HAP-1 (cell line): ENCODE measurements at regions of chr17 and their contacts with region 1.

Region 1: GRCh38 chr17:37107406-37108083 is 158.8 kb downstream of the AATF start:
- DNase-seq: no peak
- H3K4me3 ChIP-seq: no peak overlapping the region
- H3K4me1 ChIP-seq: peaks cover 80% of the 10 kb centered on the region
- H3K27me3 ChIP-seq: no peaks in the 10 kb centered on the region

Region 2: DNA sequence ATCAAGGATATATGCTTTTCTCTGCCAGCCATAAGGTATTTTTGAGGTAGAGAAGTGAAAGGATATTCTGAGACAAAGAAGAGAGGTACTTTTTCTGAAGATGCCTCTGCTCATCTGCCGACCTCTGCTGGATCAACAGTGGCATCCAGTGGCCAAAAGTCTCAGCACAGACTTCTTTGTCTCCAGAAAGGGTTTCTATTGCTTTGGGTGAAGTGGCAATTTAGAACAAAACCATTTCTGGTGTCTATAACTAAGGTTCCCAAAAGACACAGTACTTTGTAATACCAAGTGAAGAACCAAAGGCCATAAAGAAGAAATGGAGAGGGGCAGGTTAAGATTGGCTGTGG is 113.0 kb after region 1 on chr17:
- in situ Hi-C with region 1: loop called (anchors 25 kb)
- DNase-seq: peak; percentile 34 to 48
- H3K4me3 ChIP-seq: no peak overlapping the region
- H3K4me1 ChIP-seq: peaks cover 32% of the 10 kb centered on the region
- H3K27me3 ChIP-seq: no peaks in the 10 kb centered on the region

Region 3: DNA sequence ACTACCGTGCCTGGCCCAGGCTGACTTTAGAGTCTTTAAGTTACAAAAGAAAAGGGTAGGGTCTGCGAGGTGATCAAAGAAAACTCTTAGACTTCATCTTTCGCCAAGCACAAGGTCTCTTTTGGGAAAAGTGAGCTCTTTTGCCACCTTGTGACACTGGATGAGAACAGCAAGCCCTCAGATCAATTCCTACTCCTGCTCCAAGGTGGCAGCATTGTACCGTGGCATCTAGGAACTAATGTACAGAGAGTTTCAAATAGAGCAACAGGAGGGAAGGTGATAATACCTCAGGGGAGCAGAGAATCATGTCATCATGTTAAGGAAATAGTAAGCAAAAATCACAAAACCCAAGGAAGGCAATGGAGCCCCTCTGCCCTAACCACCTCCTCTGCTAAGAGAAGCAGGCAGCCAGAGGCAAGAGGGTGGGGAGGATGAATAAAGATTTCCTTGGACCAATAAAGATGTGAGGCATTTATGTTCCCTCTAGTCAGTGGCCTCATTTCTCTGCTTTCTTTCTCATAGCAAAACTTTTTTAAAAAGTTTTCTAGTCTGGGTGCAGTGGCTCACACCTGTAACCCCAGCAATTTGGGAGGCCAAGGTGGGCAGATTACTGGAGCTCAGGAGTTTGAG is 266.1 kb after region 1 on chr17:
- in situ Hi-C with region 1: no loop called
- DNase-seq: peak; percentile 81 to 86
- H3K4me3 ChIP-seq: no peak overlapping the region
- H3K4me1 ChIP-seq: no peaks in the 10 kb centered on the region; the same call in 1 of the 2 replicates
- H3K27me3 ChIP-seq: no peaks in the 10 kb centered on the region